Aorta (tissue), 5 donors: ENCODE measurements at regions of chr9 and their contacts with region 1.

Region 1: DNA sequence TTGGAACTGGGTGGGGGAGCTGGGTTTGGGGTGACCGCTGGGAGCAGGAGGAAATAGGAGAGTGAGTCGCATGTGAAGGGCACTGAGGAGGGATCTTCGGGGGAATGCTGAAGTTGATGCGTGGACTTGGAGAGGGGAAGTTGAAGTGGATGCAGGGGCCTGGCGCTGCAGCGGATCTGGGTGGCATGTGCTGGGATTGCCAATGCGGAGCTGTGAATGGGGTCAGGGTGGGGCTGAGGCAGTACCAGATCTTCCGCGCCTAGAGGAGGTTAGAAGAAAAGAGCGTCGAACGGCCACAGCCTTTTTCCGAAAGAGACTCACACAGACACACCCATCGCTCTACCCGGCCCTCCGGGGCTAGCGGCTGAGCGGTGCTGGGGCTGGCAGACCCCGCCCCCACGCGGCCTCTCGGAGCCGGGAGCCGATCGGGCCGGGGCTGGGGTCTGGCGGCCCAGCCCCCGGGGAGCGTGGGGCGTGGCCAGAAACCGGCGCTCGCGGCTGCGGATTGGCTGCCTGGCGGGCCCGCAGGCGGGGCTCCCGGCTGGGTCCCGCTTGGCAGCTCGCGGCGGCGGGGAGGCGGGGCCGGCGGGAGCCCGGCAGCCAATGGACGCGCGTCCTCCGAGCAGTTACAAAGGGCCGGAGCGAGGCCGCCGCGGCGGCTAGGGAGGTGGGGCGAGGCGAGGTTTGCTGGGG is at the start of gene TGFBR1:
- DNase-seq: peak; percentile 96 to 97
- ATAC-seq: peak; percentile 95
- H3K4me3 ChIP-seq: peak within 1 kb of the TSS; percentile 95 to 99
- H3K27ac ChIP-seq: peak within 1 kb of the TSS; percentile 80 to 99
- H3K4me1 ChIP-seq: peaks cover 0 to 5% of the 10 kb centered on the region in 2 donors
- H3K27me3 ChIP-seq: no peaks in the 10 kb centered on the region
- total RNA-seq, gene TGFBR1: 101 to 156 TPM

Region 2: GRCh38 chr9:99019790-99020331 is 84.7 kb before region 1 on chr9:
- intact Hi-C with region 1: no loop called
- DNase-seq: no peak
- ATAC-seq: peak; percentile 71
- H3K4me3 ChIP-seq: no peak overlapping the region
- H3K27ac ChIP-seq: peak overlapping the region in 1 of 2 donors; percentile 89
- H3K4me1 ChIP-seq: no peaks in the 10 kb centered on the region
- H3K27me3 ChIP-seq: no peaks in the 10 kb centered on the region

Region 3: DNA sequence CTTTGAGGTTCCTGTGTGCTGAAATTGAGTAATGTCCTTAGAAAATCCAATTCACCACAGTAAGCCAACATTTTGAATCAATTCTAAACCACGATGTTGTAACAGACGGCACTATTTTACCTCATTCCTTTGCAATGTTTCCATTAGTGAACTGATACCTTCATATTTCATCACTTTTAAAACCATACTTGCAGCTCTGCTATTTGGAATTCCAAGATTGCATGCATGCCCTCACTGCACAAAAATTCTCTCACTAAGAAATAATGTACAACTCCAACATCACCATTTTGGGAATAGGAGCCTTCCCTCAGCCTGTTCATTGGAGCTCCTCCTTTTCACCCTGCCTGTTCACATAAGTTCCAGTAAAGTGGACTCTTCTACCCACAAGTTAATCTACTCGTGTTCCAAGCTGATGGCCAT is 74.5 kb before region 1 on chr9:
- intact Hi-C with region 1: loop called in 1 of 2 experiments (anchors 5 kb)
- DNase-seq: no peak
- ATAC-seq: peak; percentile 58
- H3K4me3 ChIP-seq: no peak overlapping the region
- H3K27ac ChIP-seq: peak overlapping the region in 1 of 2 donors; percentile 32
- H3K4me1 ChIP-seq: no peaks in the 10 kb centered on the region
- H3K27me3 ChIP-seq: no peaks in the 10 kb centered on the region